IMR-90 (cell line): ENCODE measurements at regions of chr3 and their contacts with region 1.

Region 1: DNA sequence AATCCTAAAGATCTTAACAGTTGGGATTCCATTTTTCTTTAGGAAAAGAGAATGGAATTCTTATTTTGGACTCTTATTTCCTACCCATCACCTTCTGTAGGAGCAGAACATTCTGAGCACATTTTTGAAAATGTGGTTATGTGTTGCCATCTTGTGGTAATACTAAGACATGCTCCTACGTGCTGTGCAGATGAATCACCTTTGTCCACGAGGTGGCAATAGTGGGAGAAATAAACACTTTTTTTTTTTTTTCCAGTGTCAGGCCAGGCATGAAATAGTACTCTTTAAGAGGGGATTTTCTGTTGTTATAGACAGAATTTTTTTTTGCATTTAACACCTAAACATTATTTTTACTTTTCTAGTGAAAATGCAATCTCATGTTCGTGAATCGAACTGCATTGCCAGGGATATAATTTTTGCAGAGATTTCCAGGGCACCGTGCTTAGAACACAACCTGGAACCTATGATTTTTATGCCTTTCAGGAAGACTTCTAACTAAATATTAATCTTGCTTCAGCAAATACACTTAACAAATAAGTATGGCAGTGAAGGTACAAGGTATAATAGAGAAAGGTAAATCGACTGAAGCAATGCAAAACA is 196.6 kb downstream of the GAP43 start:
- DNase-seq: peak; percentile 90
- ATAC-seq: peak; percentile 91
- H3K4me3 ChIP-seq: no peak overlapping the region
- H3K27ac ChIP-seq: no peak overlapping the region
- H3K4me1 ChIP-seq: no peaks in the 10 kb centered on the region
- H3K27me3 ChIP-seq: no peaks in the 10 kb centered on the region
- CTCF ChIP-seq: peak; percentile 100; the same call in 1 of the 2 replicates
- POLR2A ChIP-seq: no peak
- RAD21 ChIP-seq: peak; percentile 91

Region 2: GRCh38 chr3:114383875-114384557 is 1435.9 kb before region 1 on chr3:
- CTCF ChIA-PET with region 1: no interaction called
- POLR2A ChIA-PET with region 1: no interaction called
- dilution Hi-C with region 1: no loop called
- in situ Hi-C with region 1: no loop called
- intact Hi-C with region 1: loop called (anchors 10 kb)
- DNase-seq: peak; percentile 81
- ATAC-seq: peak; percentile 87
- H3K4me3 ChIP-seq: no peak overlapping the region
- H3K27ac ChIP-seq: peak overlapping the region; percentile 22; the same call in 1 of the 2 replicates
- H3K4me1 ChIP-seq: peaks cover 9% of the 10 kb centered on the region
- H3K27me3 ChIP-seq: no peaks in the 10 kb centered on the region
- CTCF ChIP-seq: peak; percentile 94
- POLR2A ChIP-seq: 0 out of 2 replicates have a peak, but pooled peaks have one; percentile 25
- RAD21 ChIP-seq: peak; percentile 96

Region 3: DNA sequence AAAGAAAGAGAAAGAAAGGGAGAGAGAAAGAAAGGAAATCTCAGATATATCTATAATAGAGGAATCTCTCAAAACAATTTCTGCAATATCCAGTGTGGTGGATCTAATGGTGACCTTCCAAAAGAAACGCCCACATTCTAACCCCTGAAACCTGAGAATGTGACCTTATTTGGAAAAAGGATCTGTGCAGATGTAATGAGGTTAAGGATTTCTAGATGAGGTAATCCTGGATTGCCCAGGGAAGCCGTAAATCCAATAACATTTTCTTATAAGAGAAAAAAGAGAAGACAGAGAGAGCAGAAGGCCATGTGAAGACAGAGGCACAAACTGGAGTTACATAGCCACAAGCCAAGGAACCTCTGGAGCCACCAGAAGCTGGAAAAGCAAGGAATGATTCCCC is 980.4 kb before region 1 on chr3:
- CTCF ChIA-PET with region 1: no interaction called
- POLR2A ChIA-PET with region 1: no interaction called
- dilution Hi-C with region 1: no loop called
- in situ Hi-C with region 1: loop called (anchors 25 kb)
- intact Hi-C with region 1: loop called (anchors 10 kb)
- DNase-seq: peak; percentile 27
- ATAC-seq: no peak
- H3K4me3 ChIP-seq: no peak overlapping the region
- H3K27ac ChIP-seq: no peak overlapping the region
- H3K4me1 ChIP-seq: peaks cover 6% of the 10 kb centered on the region
- H3K27me3 ChIP-seq: no peaks in the 10 kb centered on the region
- CTCF ChIP-seq: no peak
- POLR2A ChIP-seq: no peak
- RAD21 ChIP-seq: no peak

Region 4: GRCh38 chr3:115217678-115218451 is 602.0 kb before region 1 on chr3:
- CTCF ChIA-PET with region 1: interaction called, 3 read pairs
- POLR2A ChIA-PET with region 1: no interaction called
- dilution Hi-C with region 1: no loop called
- in situ Hi-C with region 1: loop called (anchors 5 kb)
- intact Hi-C with region 1: no loop called
- DNase-seq: peak; percentile 71
- ATAC-seq: peak; percentile 97
- H3K4me3 ChIP-seq: no peak overlapping the region
- H3K27ac ChIP-seq: 0 out of 2 replicates have a peak overlapping the region, but pooled peaks have one; percentile 42
- H3K4me1 ChIP-seq: peaks cover 3% of the 10 kb centered on the region; the same call in 1 of the 2 replicates
- H3K27me3 ChIP-seq: no peaks in the 10 kb centered on the region
- CTCF ChIP-seq: peak; percentile 93
- POLR2A ChIP-seq: no peak
- RAD21 ChIP-seq: peak; percentile 93

Region 5: GRCh38 chr3:115720983-115721382 is 98.9 kb before region 1 on chr3:
- CTCF ChIA-PET with region 1: interaction called, 3 read pairs
- POLR2A ChIA-PET with region 1: interaction called, 25 read pairs
- dilution Hi-C with region 1: no loop called
- in situ Hi-C with region 1: no loop called
- intact Hi-C with region 1: no loop called
- DNase-seq: no peak
- ATAC-seq: no peak
- H3K4me3 ChIP-seq: no peak overlapping the region
- H3K27ac ChIP-seq: no peak overlapping the region
- H3K4me1 ChIP-seq: no peaks in the 10 kb centered on the region
- H3K27me3 ChIP-seq: no peaks in the 10 kb centered on the region; the same call in 1 of the 2 replicates
- CTCF ChIP-seq: no peak
- POLR2A ChIP-seq: no peak
- RAD21 ChIP-seq: no peak

Region 6: GRCh38 chr3:116445311-116445841 is 625.5 kb after region 1 on chr3 and contains the start of gene LSAMP:
- CTCF ChIA-PET with region 1: no interaction called
- POLR2A ChIA-PET with region 1: no interaction called
- dilution Hi-C with region 1: no loop called
- in situ Hi-C with region 1: no loop called
- intact Hi-C with region 1: loop called (anchors 10 kb)
- DNase-seq: peak; percentile 35
- ATAC-seq: peak; percentile 72
- H3K4me3 ChIP-seq: peak within 1 kb of the TSS; percentile 67
- H3K27ac ChIP-seq: peak within 1 kb of the TSS; percentile 43
- H3K4me1 ChIP-seq: peaks cover 5% of the 10 kb centered on the region
- H3K27me3 ChIP-seq: no peaks in the 10 kb centered on the region
- CTCF ChIP-seq: no peak
- POLR2A ChIP-seq: no peak
- RAD21 ChIP-seq: no peak
- total RNA-seq, gene LSAMP: 7.9 and 8.1 TPM in 2 replicates